ENCODE measurements at regions of chr1 and their contacts with region 1.

Region 1: GRCh38 chr1:22420455-22421053 is 31.1 kb upstream of the ZBTB40 start:
- DNase-seq: peak; percentile 88 to 90 (median 89)
- H3K4me3 ChIP-seq: no peak overlapping the region
- H3K27ac ChIP-seq: no peak overlapping the region
- H3K4me1 ChIP-seq: peaks cover 0 to 5% (median 3%) of the 10 kb centered on the region in 3 donors
- H3K27me3 ChIP-seq: no peaks in the 10 kb centered on the region
- CTCF ChIP-seq: peak; percentile 92

Region 2: GRCh38 chr1:22195802-22196440 is 224.6 kb before region 1 on chr1:
- intact Hi-C with region 1: no loop called
- DNase-seq: peak in 1 of 5 donors; percentile 14
- H3K4me3 ChIP-seq: no peak overlapping the region
- H3K27ac ChIP-seq: no peak overlapping the region
- H3K4me1 ChIP-seq: no peaks in the 10 kb centered on the region
- H3K27me3 ChIP-seq: no peaks in the 10 kb centered on the region
- CTCF ChIP-seq: no peak

Region 3: DNA sequence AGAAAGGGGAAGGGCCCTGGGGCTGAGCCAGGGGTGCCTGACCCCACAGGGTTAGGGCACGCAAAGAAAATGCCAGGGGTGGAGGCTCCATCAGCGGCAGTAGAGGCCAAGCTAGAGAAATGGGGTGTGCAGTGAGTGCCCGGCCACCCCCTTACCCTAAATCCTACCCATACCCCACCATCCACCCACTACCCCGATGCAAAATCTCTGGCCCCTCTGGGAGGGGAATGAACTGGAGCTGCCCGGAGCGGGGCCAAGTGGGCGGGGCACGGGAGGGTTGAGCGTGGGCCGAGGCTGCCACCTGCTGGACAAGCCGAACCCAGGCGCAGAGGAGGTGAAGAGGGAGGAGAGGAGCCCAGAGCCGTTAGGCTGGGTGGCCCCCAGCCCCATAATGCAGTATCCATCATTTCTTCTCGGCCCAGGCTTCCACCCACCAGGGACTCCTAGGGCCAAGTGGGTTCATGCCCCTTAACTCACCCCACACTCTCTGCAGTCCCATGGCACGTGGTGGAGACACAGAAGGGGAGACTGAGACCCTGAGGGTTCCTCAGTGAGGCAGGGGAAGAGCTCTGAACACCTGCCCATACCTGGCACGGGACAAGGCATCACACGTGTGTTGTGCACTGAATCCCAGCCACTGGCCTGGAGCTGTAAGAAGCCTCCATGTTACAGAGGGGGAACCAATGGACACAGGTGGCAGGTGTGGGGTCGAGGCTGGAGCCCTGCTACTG is 221.5 kb after region 1 on chr1:
- intact Hi-C with region 1: loop called (anchors 5 kb)
- DNase-seq: peak; percentile 65 to 92 (median 78)
- H3K4me3 ChIP-seq: no peak overlapping the region
- H3K27ac ChIP-seq: no peak overlapping the region
- H3K4me1 ChIP-seq: peaks cover 0 to 3% (median 0%) of the 10 kb centered on the region in 3 donors
- H3K27me3 ChIP-seq: no peaks in the 10 kb centered on the region
- CTCF ChIP-seq: peak; percentile 93

Measured in kidney (tissue), 22 donors.